PC-3 (cell line): ENCODE measurements at regions of chr15 and their contacts with region 1.

Region 1: DNA sequence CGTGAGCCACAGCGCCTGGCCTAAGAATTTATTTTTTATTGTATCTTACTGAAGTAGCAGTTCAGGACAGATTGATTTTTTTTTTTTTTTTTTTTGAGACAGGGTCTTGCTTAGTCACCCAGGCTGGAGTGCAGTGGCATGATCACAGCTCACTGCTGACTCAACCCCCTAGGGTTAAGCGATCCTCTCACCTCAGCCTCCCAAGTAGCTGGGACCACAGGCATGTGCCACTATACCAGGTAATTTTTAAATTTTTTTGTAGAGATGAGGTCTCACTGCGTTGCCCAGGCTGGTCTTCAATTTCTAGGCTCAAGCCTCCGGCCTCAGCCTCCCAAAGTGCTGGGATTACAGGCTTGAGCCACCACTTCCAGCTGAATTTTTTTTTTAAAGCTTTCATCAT is 99.8 kb upstream of the HERC1 start:
- DNase-seq: peak; percentile 53
- ATAC-seq: peak; percentile 65
- H3K4me3 ChIP-seq: no peak overlapping the region
- H3K27ac ChIP-seq: no peak overlapping the region
- H3K4me1 ChIP-seq: no peaks in the 10 kb centered on the region; the same call in 1 of the 2 replicates
- H3K27me3 ChIP-seq: no peaks in the 10 kb centered on the region
- CTCF ChIP-seq: no peak

Region 2: GRCh38 chr15:64022571-64022970 is 89.0 kb after region 1 on chr15:
- CTCF ChIA-PET with region 1: no interaction called
- POLR2A ChIA-PET with region 1: interaction called, 10 read pairs
- intact Hi-C with region 1: no loop called
- DNase-seq: no peak
- ATAC-seq: no peak
- H3K4me3 ChIP-seq: no peak overlapping the region
- H3K27ac ChIP-seq: no peak overlapping the region
- H3K4me1 ChIP-seq: peaks cover 35% of the 10 kb centered on the region
- H3K27me3 ChIP-seq: no peaks in the 10 kb centered on the region
- CTCF ChIP-seq: no peak